ENCODE measurements at regions of chr7 and their contacts with region 1.

Region 1: DNA sequence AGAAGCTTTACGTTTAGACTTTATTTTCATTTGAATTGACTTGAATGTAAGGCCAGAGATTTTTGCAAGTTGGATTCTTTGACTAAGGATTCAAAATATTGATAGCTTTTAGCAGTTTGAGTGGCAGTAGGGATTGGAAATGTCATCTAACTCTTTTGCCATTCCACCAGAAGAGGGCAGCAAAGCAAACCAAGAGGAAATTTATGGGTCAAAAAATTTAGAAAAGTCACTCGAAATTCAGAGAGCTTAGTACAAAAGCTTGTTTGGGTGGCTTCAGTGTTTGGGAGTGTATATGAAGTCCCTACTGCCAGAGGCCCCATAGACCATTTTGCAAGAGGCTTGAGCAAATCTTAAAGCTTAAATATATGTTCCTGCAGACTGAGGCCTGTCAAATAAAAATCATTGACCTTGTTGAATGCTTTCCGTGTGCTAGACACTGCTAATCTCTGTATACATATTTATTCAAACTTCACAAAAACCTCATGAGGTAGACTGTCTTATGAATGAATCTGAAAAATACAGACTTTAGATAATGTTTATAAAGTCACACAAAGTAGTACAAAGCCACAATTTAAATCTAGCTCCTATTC is 44.6 kb upstream of the RSBN1L start:
- DNase-seq: peak; percentile 38
- H3K4me3 Mint-ChIP-seq: no peak overlapping the region
- H3K27ac Mint-ChIP-seq: no peak overlapping the region
- H3K4me1 Mint-ChIP-seq: no peaks in the 10 kb centered on the region
- H3K27me3 Mint-ChIP-seq: no peaks in the 10 kb centered on the region

Region 2: GRCh38 chr7:77561352-77561751 is 90.3 kb before region 1 on chr7:
- CTCF ChIA-PET with region 1: no interaction called
- DNase-seq: no peak
- H3K4me3 Mint-ChIP-seq: no peak overlapping the region
- H3K27ac Mint-ChIP-seq: no peak overlapping the region
- H3K4me1 Mint-ChIP-seq: no peaks in the 10 kb centered on the region
- H3K27me3 Mint-ChIP-seq: no peaks in the 10 kb centered on the region

Region 3: GRCh38 chr7:77753173-77753572 is 101.5 kb after region 1 on chr7:
- CTCF ChIA-PET with region 1: interaction called, 32 read pairs
- DNase-seq: no peak
- H3K4me3 Mint-ChIP-seq: no peak overlapping the region
- H3K27ac Mint-ChIP-seq: no peak overlapping the region
- H3K4me1 Mint-ChIP-seq: peaks cover 26% of the 10 kb centered on the region
- H3K27me3 Mint-ChIP-seq: no peaks in the 10 kb centered on the region

Region 4: GRCh38 chr7:77759294-77759889 is 107.7 kb after region 1 on chr7:
- CTCF ChIA-PET with region 1: interaction called, 41 read pairs
- DNase-seq: peak; percentile 74
- H3K4me3 Mint-ChIP-seq: no peak overlapping the region
- H3K27ac Mint-ChIP-seq: no peak overlapping the region
- H3K4me1 Mint-ChIP-seq: peaks cover 5% of the 10 kb centered on the region
- H3K27me3 Mint-ChIP-seq: no peaks in the 10 kb centered on the region

Region 5: DNA sequence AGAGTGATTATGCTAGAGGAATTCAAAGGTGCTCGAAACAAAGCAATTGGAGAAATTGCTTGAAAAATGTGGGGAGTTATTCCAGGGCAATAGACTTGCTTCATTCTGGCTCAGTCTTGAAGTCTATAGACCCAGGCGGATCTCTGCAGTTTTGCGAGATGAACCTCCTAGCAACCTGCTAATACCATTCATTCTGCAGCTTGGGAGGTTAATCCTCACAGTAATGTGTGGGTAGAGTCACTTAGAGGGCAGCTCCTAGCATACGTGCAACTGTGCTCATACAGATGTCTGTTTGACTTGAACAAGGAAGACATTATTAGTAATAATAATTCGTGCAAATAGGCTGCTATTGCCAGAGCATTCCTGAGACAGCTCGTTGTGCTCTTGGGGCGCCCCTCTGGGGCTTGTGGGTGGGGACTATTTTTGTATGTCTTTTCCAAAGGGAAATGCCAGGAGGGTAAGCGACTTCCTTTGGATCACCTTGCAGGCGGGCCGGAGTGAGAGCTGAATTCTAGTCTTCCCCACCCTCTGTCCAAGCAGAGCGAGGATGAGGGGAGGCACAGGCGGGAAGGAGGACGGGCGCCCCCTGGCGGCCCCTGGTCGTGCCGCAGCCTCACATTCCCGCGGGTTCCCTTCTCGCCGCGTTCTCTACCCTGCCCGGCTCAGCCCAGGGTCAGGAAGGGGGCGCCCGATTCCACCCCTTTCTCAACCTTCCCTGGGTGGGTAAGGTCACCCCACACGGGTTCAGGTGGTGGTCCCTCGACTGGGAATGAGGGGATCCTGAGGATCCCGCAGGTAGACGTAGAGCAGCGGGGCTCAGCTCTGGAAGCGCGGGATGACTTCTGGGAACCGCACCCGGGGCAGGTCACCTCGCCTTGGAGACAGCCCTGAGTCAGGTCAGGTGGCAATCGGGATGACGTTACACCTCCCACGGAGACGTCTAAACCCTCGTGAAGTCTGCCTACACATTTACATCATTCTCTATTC is 388.4 kb after region 1 on chr7:
- CTCF ChIA-PET with region 1: interaction called, 19 read pairs
- DNase-seq: peak; percentile 65
- H3K4me3 Mint-ChIP-seq: no peak overlapping the region
- H3K27ac Mint-ChIP-seq: no peak overlapping the region
- H3K4me1 Mint-ChIP-seq: no peaks in the 10 kb centered on the region
- H3K27me3 Mint-ChIP-seq: peaks cover 29% of the 10 kb centered on the region